Endothelial cell of umbilical vein (primary cell): ENCODE measurements at regions of chr1 and their contacts with region 1.

Region 1: GRCh38 chr1:53326088-53326597 is 1.7 kb downstream of the LRP8 start:
- DNase-seq: peak; percentile 81
- H3K4me3 ChIP-seq: peak overlapping the region; percentile 53 to 83 (median 79)
- H3K27ac ChIP-seq: peak overlapping the region; percentile 81
- H3K4me1 ChIP-seq: peaks cover 16% of the 10 kb centered on the region
- H3K27me3 ChIP-seq: no peaks in the 10 kb centered on the region
- CTCF ChIP-seq: no peak
- POLR2A ChIP-seq: peak; percentile 76

Region 2: GRCh38 chr1:53196485-53197270 is 129.5 kb before region 1 on chr1 and contains the start of gene CPT2:
- CTCF ChIA-PET with region 1: no interaction called
- POLR2A ChIA-PET with region 1: no interaction called
- dilution Hi-C with region 1: no loop called
- intact Hi-C with region 1: loop called (anchors 2 kb)
- DNase-seq: peak; percentile 79
- H3K4me3 ChIP-seq: peak within 1 kb of the TSS; percentile 63 to 92 (median 77)
- H3K27ac ChIP-seq: peak within 1 kb of the TSS; percentile 74
- H3K4me1 ChIP-seq: peaks cover 13% of the 10 kb centered on the region
- H3K27me3 ChIP-seq: no peaks in the 10 kb centered on the region
- CTCF ChIP-seq: peak in 1 of 2 donors; percentile 3
- POLR2A ChIP-seq: peak; percentile 93
- total RNA-seq, gene CPT2: 10.4 and 11.6 TPM in 2 replicates

Region 3: GRCh38 chr1:53238197-53239155 is 87.7 kb before region 1 on chr1 and contains the start of gene MAGOH:
- CTCF ChIA-PET with region 1: no interaction called
- POLR2A ChIA-PET with region 1: no interaction called
- dilution Hi-C with region 1: no loop called
- intact Hi-C with region 1: loop called (anchors 1 kb)
- DNase-seq: peak; percentile 97
- H3K4me3 ChIP-seq: peak within 1 kb of the TSS; percentile 82 to 97 (median 89)
- H3K27ac ChIP-seq: peak within 1 kb of the TSS; percentile 81
- H3K4me1 ChIP-seq: peaks cover 8% of the 10 kb centered on the region
- H3K27me3 ChIP-seq: no peaks in the 10 kb centered on the region
- CTCF ChIP-seq: no peak
- POLR2A ChIP-seq: peak; percentile 85
- total RNA-seq, gene MAGOH: 59.8 and 60.1 TPM in 2 replicates

Region 4: DNA sequence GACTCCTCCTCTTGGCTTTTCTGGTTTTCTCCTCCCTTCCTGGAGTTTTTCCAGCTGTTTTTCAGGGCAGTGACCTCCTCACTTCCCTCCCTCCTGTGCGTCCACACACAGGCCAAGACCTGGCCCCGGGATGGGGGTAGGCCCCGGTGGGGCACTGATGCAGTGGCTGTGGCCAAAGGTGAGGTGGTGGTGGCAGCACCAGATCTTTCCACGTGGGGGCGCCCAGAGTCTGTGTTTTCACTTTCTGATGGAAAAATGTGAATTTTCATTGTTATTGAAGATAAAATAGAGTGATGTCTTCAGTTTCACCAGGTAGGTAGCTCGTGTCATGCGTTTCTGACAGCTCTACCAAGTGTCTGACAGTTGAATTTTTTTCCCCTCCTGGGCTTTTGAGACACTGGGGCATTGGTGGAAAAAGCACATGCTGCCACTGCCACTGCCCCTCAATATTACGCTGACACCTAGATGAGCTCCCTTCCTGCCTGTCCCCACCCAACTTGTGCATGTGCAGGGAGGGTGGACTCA is 47.9 kb before region 1 on chr1:
- CTCF ChIA-PET with region 1: interaction called, 6 read pairs
- POLR2A ChIA-PET with region 1: interaction called, 3 read pairs
- dilution Hi-C with region 1: no loop called
- intact Hi-C with region 1: loop called (anchors 2 kb)
- DNase-seq: peak; percentile 36
- H3K4me3 ChIP-seq: no peak overlapping the region
- H3K27ac ChIP-seq: no peak overlapping the region
- H3K4me1 ChIP-seq: no peaks in the 10 kb centered on the region
- H3K27me3 ChIP-seq: no peaks in the 10 kb centered on the region
- CTCF ChIP-seq: peak; percentile 79 to 83
- POLR2A ChIP-seq: no peak

Region 5: DNA sequence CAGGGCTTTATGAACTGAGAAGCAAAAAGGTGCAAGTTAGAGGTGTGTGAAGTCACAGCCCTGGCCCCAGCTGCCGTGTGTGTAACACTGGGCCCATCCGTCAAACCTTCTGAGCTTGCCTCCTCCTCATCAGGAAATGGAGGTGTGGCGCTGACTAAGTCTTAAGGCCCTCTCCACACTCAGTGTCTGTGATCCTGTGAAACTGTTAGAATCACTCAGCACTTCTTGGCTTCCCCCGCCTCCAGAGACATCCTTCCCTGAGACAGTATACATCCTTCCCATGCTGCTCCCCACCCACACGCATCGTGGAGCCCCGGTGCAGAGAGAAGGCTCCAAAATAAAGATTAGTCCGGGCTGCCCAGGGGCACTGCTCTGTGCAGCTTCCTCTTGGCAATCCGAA is 31.6 kb before region 1 on chr1:
- CTCF ChIA-PET with region 1: no interaction called
- POLR2A ChIA-PET with region 1: no interaction called
- dilution Hi-C with region 1: no loop called
- intact Hi-C with region 1: loop called (anchors 1 kb)
- DNase-seq: no peak
- H3K4me3 ChIP-seq: no peak overlapping the region
- H3K27ac ChIP-seq: no peak overlapping the region
- H3K4me1 ChIP-seq: peaks cover 24% of the 10 kb centered on the region
- H3K27me3 ChIP-seq: no peaks in the 10 kb centered on the region
- CTCF ChIP-seq: no peak
- POLR2A ChIP-seq: no peak